ENCODE measurements at regions of chr4 and their contacts with region 1.

Region 1: DNA sequence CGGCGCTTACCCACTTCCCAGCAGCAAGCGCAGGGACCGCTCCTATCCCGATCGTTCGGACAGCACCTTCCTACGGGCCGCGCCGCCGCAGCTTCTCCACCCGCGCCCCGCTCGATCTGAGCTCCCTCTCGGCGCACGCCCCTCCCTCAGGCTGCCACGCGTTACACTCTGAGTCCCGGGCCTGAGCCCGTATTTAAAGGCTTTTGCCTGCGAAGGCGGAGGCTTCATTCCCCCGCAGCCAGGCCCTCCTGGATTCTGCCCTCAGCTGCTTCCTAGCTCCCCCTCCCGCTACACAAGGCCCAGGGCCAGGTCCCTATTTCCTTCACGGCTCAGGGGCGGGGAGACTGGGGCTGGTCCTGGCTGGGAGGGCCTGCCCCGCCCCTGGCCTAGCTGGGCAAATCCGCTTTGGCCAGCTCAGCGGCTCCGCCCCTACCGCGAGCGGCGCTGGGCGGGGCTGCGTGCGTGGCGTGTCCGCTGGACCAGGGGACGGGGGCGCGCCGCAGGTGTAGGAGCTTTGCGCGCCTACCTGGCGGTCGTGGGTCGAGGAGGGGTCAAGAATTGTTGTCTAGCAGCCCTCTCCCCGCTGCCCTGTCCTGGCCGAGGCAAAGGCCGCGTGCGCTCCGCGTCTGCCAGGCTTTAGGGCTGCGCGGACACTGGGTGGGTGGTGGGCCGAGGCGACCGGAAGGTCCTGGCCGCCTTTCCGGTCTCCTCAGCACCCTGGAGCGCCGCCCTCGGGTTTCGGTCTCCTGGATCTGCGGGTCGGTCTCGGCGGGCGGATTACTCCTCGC is at the start of gene UGDH:
- DNase-seq: peak; percentile 98
- ATAC-seq: peak; percentile 89
- H3K4me3 ChIP-seq: peak within 1 kb of the TSS; percentile 95 to 96 (median 96)
- H3K27ac ChIP-seq: peak within 1 kb of the TSS; percentile 94
- H3K4me1 ChIP-seq: peaks cover 24% of the 10 kb centered on the region
- H3K27me3 ChIP-seq: peaks cover 0 to 4% of the 10 kb centered on the region in 2 experiments; a peak in 1 of 5 replicates
- CTCF ChIP-seq: peak; percentile 49
- EP300 ChIP-seq: peak; percentile 11 to 55; a peak in 2 of 4 replicates
- POLR2A ChIP-seq: peak; percentile 100
- RAD21 ChIP-seq: peak; percentile 76
- total RNA-seq, gene UGDH: 384 and 661 TPM in 2 replicates

Region 2: DNA sequence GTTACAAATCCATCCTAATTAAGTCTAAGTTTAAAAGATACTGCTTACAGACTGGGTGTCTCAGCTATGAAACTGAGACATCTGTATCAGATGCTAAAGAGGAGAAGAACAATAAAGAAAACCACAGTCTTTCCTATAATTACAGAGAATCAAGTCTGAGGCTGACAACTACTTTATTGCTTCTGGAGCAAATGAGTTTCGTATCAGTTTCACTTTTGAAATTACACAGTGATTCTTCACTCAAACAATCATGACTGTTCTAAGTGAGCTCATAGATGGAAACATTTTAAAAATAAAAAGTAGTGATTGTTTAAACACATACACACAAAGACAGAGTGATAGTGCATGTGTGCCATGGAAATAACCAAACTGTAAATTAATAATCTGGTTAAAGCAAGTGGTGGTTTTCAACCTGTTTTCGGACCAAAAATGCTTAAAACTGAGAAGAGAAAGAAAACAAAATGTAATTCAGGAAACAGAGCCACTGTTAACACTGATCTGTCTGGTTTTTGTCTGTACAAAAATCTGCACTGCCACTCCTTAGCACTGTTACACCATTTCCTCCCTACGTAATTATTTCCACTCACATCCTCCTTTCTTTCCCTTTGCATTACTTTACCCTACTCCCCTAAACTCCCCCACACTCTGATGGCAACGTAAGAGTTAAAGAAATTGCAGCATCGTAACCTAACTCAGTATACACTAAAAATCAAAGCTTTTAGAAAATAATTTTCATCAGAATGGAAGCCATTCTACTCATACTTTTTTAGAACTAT is 173.8 kb before region 1 on chr4:
- CTCF ChIA-PET with region 1: no interaction called
- POLR2A ChIA-PET with region 1: no interaction called
- in situ Hi-C with region 1: no loop called
- intact Hi-C with region 1: no loop called
- DNase-seq: no peak
- ATAC-seq: no peak
- H3K4me3 ChIP-seq: no peak overlapping the region; a peak in 1 of 6 replicates
- H3K27ac ChIP-seq: peak overlapping the region; percentile 20
- H3K4me1 ChIP-seq: peaks cover 56% of the 10 kb centered on the region
- H3K27me3 ChIP-seq: no peaks in the 10 kb centered on the region
- CTCF ChIP-seq: no peak
- EP300 ChIP-seq: no peak
- POLR2A ChIP-seq: no peak
- RAD21 ChIP-seq: no peak

Region 3: DNA sequence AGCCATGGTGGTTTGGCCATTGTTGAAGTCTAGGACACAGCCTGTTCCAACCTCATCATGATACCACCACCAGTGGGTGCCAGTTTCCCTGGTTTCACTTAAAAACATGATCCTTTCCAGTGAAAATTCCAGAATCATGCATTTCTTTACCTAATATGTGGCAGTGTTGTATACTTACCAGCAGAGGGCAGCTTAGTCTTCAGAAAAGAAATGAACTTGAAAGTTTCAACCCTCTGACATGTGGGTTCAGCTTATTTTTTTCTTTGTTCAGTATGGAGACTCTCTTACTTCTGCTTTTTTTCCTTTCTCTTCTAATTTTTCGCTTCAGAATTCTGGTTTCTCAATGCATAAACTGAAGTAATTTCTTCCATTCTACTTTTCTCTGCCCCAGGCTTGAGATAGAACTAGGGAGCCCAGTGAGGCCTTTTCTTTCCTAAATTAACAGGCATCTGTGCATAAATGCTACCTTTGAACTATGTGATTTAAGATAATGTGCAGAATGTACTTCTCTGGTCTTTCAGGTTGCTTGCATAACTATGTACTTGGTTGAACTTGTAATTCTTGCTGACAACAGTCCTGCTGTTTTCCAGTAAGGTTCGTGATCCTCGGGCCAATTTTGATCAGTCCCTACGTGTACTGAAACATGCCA is 57.9 kb before region 1 on chr4:
- CTCF ChIA-PET with region 1: no interaction called
- POLR2A ChIA-PET with region 1: interaction called, 34 read pairs
- in situ Hi-C with region 1: no loop called
- intact Hi-C with region 1: loop called (anchors 5 kb)
- DNase-seq: peak; percentile 89
- ATAC-seq: peak; percentile 93
- H3K4me3 ChIP-seq: no peak overlapping the region
- H3K27ac ChIP-seq: peak overlapping the region; percentile 77
- H3K4me1 ChIP-seq: peaks cover 58% of the 10 kb centered on the region
- H3K27me3 ChIP-seq: no peaks in the 10 kb centered on the region
- CTCF ChIP-seq: peak; percentile 84
- EP300 ChIP-seq: peak in 1 of 2 experiments; percentile 47; a peak in 1 of 4 replicates
- POLR2A ChIP-seq: no peak
- RAD21 ChIP-seq: peak; percentile 91

Region 4: GRCh38 chr4:39541987-39542610 is 14.6 kb after region 1 on chr4:
- CTCF ChIA-PET with region 1: no interaction called
- POLR2A ChIA-PET with region 1: interaction called, 14 read pairs
- in situ Hi-C with region 1: no loop called
- intact Hi-C with region 1: no loop called
- DNase-seq: no peak
- ATAC-seq: no peak
- H3K4me3 ChIP-seq: no peak overlapping the region
- H3K27ac ChIP-seq: no peak overlapping the region
- H3K4me1 ChIP-seq: peaks cover 37% of the 10 kb centered on the region
- H3K27me3 ChIP-seq: no peaks in the 10 kb centered on the region
- CTCF ChIP-seq: no peak
- EP300 ChIP-seq: no peak
- POLR2A ChIP-seq: no peak
- RAD21 ChIP-seq: no peak

Region 5: GRCh38 chr4:39631700-39632079 is 104.2 kb after region 1 on chr4:
- CTCF ChIA-PET with region 1: no interaction called
- POLR2A ChIA-PET with region 1: interaction called, 13 read pairs
- in situ Hi-C with region 1: loop called (anchors 5 kb)
- intact Hi-C with region 1: no loop called
- DNase-seq: no peak
- ATAC-seq: no peak
- H3K4me3 ChIP-seq: no peak overlapping the region
- H3K27ac ChIP-seq: no peak overlapping the region
- H3K4me1 ChIP-seq: peaks cover 43% of the 10 kb centered on the region
- H3K27me3 ChIP-seq: no peaks in the 10 kb centered on the region
- CTCF ChIP-seq: no peak
- EP300 ChIP-seq: no peak
- POLR2A ChIP-seq: no peak
- RAD21 ChIP-seq: no peak

Region 6: GRCh38 chr4:39664828-39665731 is 137.6 kb after region 1 on chr4:
- CTCF ChIA-PET with region 1: no interaction called
- POLR2A ChIA-PET with region 1: interaction called, 14 read pairs
- in situ Hi-C with region 1: no loop called
- intact Hi-C with region 1: no loop called
- DNase-seq: peak; percentile 89
- ATAC-seq: peak; percentile 96
- H3K4me3 ChIP-seq: peak overlapping the region in 1 of 3 experiments; percentile 10; a peak in 1 of 6 replicates
- H3K27ac ChIP-seq: peak overlapping the region; percentile 56
- H3K4me1 ChIP-seq: peaks cover 26% of the 10 kb centered on the region
- H3K27me3 ChIP-seq: no peaks in the 10 kb centered on the region
- CTCF ChIP-seq: no peak
- EP300 ChIP-seq: 0 out of 4 replicates have a peak, but pooled peaks of 1 of the 2 experiments have one; percentile 13
- POLR2A ChIP-seq: no peak
- RAD21 ChIP-seq: no peak